IMR-90 (cell line): ENCODE measurements at regions of chr4 and their contacts with region 1.

Region 1: DNA sequence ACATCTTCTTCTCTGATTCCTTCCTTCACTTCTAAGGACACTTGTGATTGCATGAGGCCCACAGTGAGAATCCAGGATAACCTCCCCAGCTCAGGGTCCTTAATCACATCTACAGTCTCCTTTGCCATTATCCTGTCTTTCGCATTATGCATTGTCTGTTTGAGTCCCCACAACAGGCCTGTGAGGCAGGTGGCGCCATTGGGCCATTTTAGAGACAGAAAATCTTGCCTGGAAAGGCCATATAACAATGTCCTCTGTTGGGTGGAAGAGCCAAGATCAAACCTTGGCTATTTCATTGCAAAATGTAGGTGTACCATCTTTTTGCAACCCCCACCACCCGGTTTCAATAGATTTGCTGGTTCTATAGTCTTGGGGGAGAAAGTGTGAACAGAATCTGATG is 11.8 kb upstream of the DCUN1D4 start:
- DNase-seq: peak; percentile 51
- ATAC-seq: peak; percentile 87
- H3K4me3 ChIP-seq: no peak overlapping the region
- H3K27ac ChIP-seq: no peak overlapping the region
- H3K4me1 ChIP-seq: no peaks in the 10 kb centered on the region; the same call in 1 of the 2 replicates
- H3K27me3 ChIP-seq: no peaks in the 10 kb centered on the region; the same call in none of the 2 replicates
- CTCF ChIP-seq: peak; percentile 79
- POLR2A ChIP-seq: no peak
- RAD21 ChIP-seq: peak; percentile 82

Region 2: GRCh38 chr4:52028969-52029368 is 197.8 kb after region 1 on chr4:
- CTCF ChIA-PET with region 1: no interaction called
- POLR2A ChIA-PET with region 1: no interaction called
- dilution Hi-C with region 1: no loop called
- in situ Hi-C with region 1: no loop called
- intact Hi-C with region 1: loop called (anchors 1 kb)
- DNase-seq: peak; percentile 79
- ATAC-seq: peak; percentile 94
- H3K4me3 ChIP-seq: no peak overlapping the region
- H3K27ac ChIP-seq: no peak overlapping the region
- H3K4me1 ChIP-seq: 0 out of 2 replicates have a peak, but pooled peaks cover 1% of the 10 kb centered on the region
- H3K27me3 ChIP-seq: no peaks in the 10 kb centered on the region
- CTCF ChIP-seq: no peak
- POLR2A ChIP-seq: no peak
- RAD21 ChIP-seq: no peak

Region 3: GRCh38 chr4:52172166-52172565 is 341.0 kb after region 1 on chr4:
- CTCF ChIA-PET with region 1: no interaction called
- POLR2A ChIA-PET with region 1: no interaction called
- dilution Hi-C with region 1: no loop called
- in situ Hi-C with region 1: no loop called
- intact Hi-C with region 1: loop called (anchors 1 kb)
- DNase-seq: no peak
- ATAC-seq: no peak
- H3K4me3 ChIP-seq: no peak overlapping the region
- H3K27ac ChIP-seq: no peak overlapping the region
- H3K4me1 ChIP-seq: no peaks in the 10 kb centered on the region
- H3K27me3 ChIP-seq: no peaks in the 10 kb centered on the region
- CTCF ChIP-seq: peak; percentile 36
- POLR2A ChIP-seq: no peak
- RAD21 ChIP-seq: peak; percentile 47

Region 4: GRCh38 chr4:52968691-52969090 is 1137.6 kb after region 1 on chr4:
- CTCF ChIA-PET with region 1: no interaction called
- POLR2A ChIA-PET with region 1: no interaction called
- dilution Hi-C with region 1: no loop called
- in situ Hi-C with region 1: no loop called
- intact Hi-C with region 1: no loop called
- DNase-seq: no peak
- ATAC-seq: no peak
- H3K4me3 ChIP-seq: no peak overlapping the region
- H3K27ac ChIP-seq: no peak overlapping the region
- H3K4me1 ChIP-seq: no peaks in the 10 kb centered on the region
- H3K27me3 ChIP-seq: no peaks in the 10 kb centered on the region
- CTCF ChIP-seq: no peak
- POLR2A ChIP-seq: no peak
- RAD21 ChIP-seq: no peak